CD8-positive, alpha-beta T cell (primary cell): ENCODE measurements at regions of chr2 and their contacts with region 1.

Region 1: GRCh38 chr2:33583194-33583938 is 15.7 kb downstream of the FAM98A start:
- DNase-seq: peak in 6 of 9 experiments; percentile 16 to 65 (median 22)
- ATAC-seq: no peak
- H3K4me3 ChIP-seq: no peak overlapping the region
- H3K4me3 Mint-ChIP-seq: no peak overlapping the region
- H3K27ac ChIP-seq: no peak overlapping the region
- H3K27ac Mint-ChIP-seq: no peak overlapping the region
- H3K4me1 ChIP-seq: no peaks in the 10 kb centered on the region
- H3K4me1 Mint-ChIP-seq: peaks cover 4% of the 10 kb centered on the region
- H3K27me3 ChIP-seq: no peaks in the 10 kb centered on the region
- H3K27me3 Mint-ChIP-seq: no peaks in the 10 kb centered on the region
- CTCF ChIP-seq: peak; percentile 96

Region 2: GRCh38 chr2:32553829-32554432 is 1029.4 kb before region 1 on chr2:
- CTCF ChIA-PET with region 1: no interaction called
- POLR2A ChIA-PET with region 1: no interaction called
- intact Hi-C with region 1: loop called in 1 of 2 experiments (anchors 1 kb)
- DNase-seq: peak in 2 of 9 experiments; percentile 43 to 57
- ATAC-seq: peak; percentile 55
- H3K4me3 ChIP-seq: no peak overlapping the region
- H3K4me3 Mint-ChIP-seq: no peak overlapping the region
- H3K27ac ChIP-seq: no peak overlapping the region
- H3K27ac Mint-ChIP-seq: no peak overlapping the region
- H3K4me1 ChIP-seq: no peaks in the 10 kb centered on the region
- H3K4me1 Mint-ChIP-seq: no peaks in the 10 kb centered on the region
- H3K27me3 ChIP-seq: no peaks in the 10 kb centered on the region
- H3K27me3 Mint-ChIP-seq: no peaks in the 10 kb centered on the region
- CTCF ChIP-seq: peak; percentile 81

Region 3: DNA sequence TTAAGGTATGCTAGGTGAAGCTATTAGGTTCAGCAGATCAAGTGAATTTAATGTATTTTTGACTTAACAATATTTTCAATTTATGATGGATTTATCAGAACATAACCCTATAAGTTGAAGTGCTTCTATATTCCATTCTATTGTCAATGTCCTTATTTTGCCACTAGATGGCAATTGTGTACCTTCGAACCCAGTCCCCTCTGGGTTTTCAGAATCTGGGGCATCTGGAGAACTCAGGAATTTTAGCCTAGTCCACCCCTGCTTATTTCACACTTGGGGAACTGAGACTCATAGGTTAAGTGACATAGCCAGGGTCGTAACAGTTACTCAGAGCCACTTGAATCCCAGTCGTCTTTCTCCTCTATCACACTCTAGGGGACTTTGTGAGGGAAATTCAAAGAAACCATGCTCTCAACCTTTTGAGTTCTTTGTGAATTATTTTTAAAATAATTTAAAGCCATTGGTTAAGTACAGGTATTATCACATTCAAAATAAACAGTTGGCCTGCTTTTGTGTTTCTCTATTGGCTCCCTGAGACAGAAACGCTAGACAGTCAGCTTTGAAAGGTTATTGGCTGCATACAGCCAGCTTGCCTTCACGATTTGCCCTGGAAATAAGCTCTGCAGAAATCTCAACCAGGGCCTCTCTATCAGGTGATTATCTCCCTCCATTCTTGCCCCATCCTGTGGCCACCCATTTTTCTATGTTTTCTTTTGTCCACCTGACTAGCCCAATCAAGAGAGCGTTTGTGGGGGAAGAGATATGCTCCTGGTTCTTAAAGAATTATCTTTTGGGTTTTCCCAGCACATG is 810.5 kb before region 1 on chr2:
- CTCF ChIA-PET with region 1: no interaction called
- POLR2A ChIA-PET with region 1: no interaction called
- intact Hi-C with region 1: loop called (anchors 5 to 10 kb)
- DNase-seq: no peak
- ATAC-seq: no peak
- H3K4me3 ChIP-seq: no peak overlapping the region
- H3K4me3 Mint-ChIP-seq: no peak overlapping the region
- H3K27ac ChIP-seq: no peak overlapping the region
- H3K27ac Mint-ChIP-seq: no peak overlapping the region
- H3K4me1 ChIP-seq: no peaks in the 10 kb centered on the region
- H3K4me1 Mint-ChIP-seq: no peaks in the 10 kb centered on the region
- H3K27me3 ChIP-seq: no peaks in the 10 kb centered on the region
- H3K27me3 Mint-ChIP-seq: no peaks in the 10 kb centered on the region
- CTCF ChIP-seq: no peak

Region 4: GRCh38 chr2:33205693-33206434 is 377.5 kb before region 1 on chr2:
- CTCF ChIA-PET with region 1: no interaction called
- POLR2A ChIA-PET with region 1: no interaction called
- intact Hi-C with region 1: loop called in 1 of 2 experiments (anchors 5 kb)
- DNase-seq: no peak
- ATAC-seq: no peak
- H3K4me3 ChIP-seq: no peak overlapping the region
- H3K4me3 Mint-ChIP-seq: no peak overlapping the region
- H3K27ac ChIP-seq: no peak overlapping the region
- H3K27ac Mint-ChIP-seq: no peak overlapping the region
- H3K4me1 ChIP-seq: no peaks in the 10 kb centered on the region
- H3K4me1 Mint-ChIP-seq: no peaks in the 10 kb centered on the region
- H3K27me3 ChIP-seq: no peaks in the 10 kb centered on the region
- H3K27me3 Mint-ChIP-seq: no peaks in the 10 kb centered on the region
- CTCF ChIP-seq: no peak

Region 5: GRCh38 chr2:33372940-33373553 is 210.3 kb before region 1 on chr2:
- CTCF ChIA-PET with region 1: interaction called, 4 read pairs
- POLR2A ChIA-PET with region 1: no interaction called
- intact Hi-C with region 1: loop called (anchors 2 to 10 kb)
- DNase-seq: peak in 3 of 9 experiments; percentile 16 to 64 (median 60)
- ATAC-seq: peak; percentile 38
- H3K4me3 ChIP-seq: no peak overlapping the region
- H3K4me3 Mint-ChIP-seq: no peak overlapping the region
- H3K27ac ChIP-seq: no peak overlapping the region
- H3K27ac Mint-ChIP-seq: no peak overlapping the region
- H3K4me1 ChIP-seq: no peaks in the 10 kb centered on the region
- H3K4me1 Mint-ChIP-seq: no peaks in the 10 kb centered on the region
- H3K27me3 ChIP-seq: peaks cover 0 to 3% of the 10 kb centered on the region in 2 experiments
- H3K27me3 Mint-ChIP-seq: no peaks in the 10 kb centered on the region
- CTCF ChIP-seq: peak; percentile 88

Region 6: GRCh38 chr2:33412920-33413319 is 170.4 kb before region 1 on chr2:
- CTCF ChIA-PET with region 1: interaction called, 3 read pairs
- POLR2A ChIA-PET with region 1: no interaction called
- intact Hi-C with region 1: loop called (anchors 2 to 5 kb)
- DNase-seq: peak in 1 of 9 experiments; percentile 5
- ATAC-seq: no peak
- H3K4me3 ChIP-seq: no peak overlapping the region
- H3K4me3 Mint-ChIP-seq: no peak overlapping the region
- H3K27ac ChIP-seq: no peak overlapping the region
- H3K27ac Mint-ChIP-seq: no peak overlapping the region
- H3K4me1 ChIP-seq: no peaks in the 10 kb centered on the region
- H3K4me1 Mint-ChIP-seq: no peaks in the 10 kb centered on the region
- H3K27me3 ChIP-seq: peaks cover 0 to 5% of the 10 kb centered on the region in 2 experiments
- H3K27me3 Mint-ChIP-seq: peaks cover 9% of the 10 kb centered on the region
- CTCF ChIP-seq: no peak